ENCODE measurements at regions of chr2 and their contacts with region 1.

Region 1: DNA sequence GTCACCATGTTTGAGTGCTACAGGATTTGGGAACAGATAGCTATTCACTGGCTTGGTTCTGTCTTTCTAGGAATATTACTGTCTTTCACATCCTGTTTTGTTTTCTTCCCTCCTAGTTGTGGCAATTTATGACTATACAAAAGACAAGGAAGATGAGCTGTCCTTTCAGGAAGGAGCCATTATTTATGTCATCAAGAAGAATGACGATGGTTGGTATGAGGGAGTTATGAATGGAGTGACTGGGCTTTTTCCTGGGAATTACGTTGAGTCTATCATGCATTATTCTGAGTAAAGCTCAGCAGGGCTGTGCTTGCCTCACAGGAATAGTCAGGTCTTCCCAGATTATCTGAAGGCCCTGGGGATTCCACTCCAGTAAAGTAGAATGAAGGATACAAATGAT is 98.9 kb downstream of the ABI2 start:
- DNase-seq: peak; percentile 49
- ATAC-seq: peak; percentile 32; the same call in 1 of the 2 replicates
- H3K4me3 ChIP-seq: no peak overlapping the region
- H3K27ac ChIP-seq: no peak overlapping the region
- H3K4me1 ChIP-seq: no peaks in the 10 kb centered on the region
- H3K27me3 ChIP-seq: no peaks in the 10 kb centered on the region
- CTCF ChIP-seq: no peak
- POLR2A ChIP-seq: no peak
- RAD21 ChIP-seq: no peak

Region 2: GRCh38 chr2:203261326-203262159 is 165.5 kb before region 1 on chr2:
- CTCF ChIA-PET with region 1: no interaction called
- POLR2A ChIA-PET with region 1: no interaction called
- dilution Hi-C with region 1: no loop called
- in situ Hi-C with region 1: no loop called
- intact Hi-C with region 1: loop called (anchors 10 kb)
- DNase-seq: no peak
- ATAC-seq: no peak
- H3K4me3 ChIP-seq: no peak overlapping the region
- H3K27ac ChIP-seq: no peak overlapping the region
- H3K4me1 ChIP-seq: no peaks in the 10 kb centered on the region
- H3K27me3 ChIP-seq: no peaks in the 10 kb centered on the region
- CTCF ChIP-seq: no peak
- POLR2A ChIP-seq: no peak
- RAD21 ChIP-seq: no peak

Region 3: GRCh38 chr2:203360833-203361430 is 66.1 kb before region 1 on chr2:
- CTCF ChIA-PET with region 1: no interaction called
- POLR2A ChIA-PET with region 1: no interaction called
- dilution Hi-C with region 1: no loop called
- in situ Hi-C with region 1: no loop called
- intact Hi-C with region 1: no loop called
- DNase-seq: peak; percentile 19
- ATAC-seq: no peak
- H3K4me3 ChIP-seq: no peak overlapping the region
- H3K27ac ChIP-seq: no peak overlapping the region
- H3K4me1 ChIP-seq: no peaks in the 10 kb centered on the region
- H3K27me3 ChIP-seq: no peaks in the 10 kb centered on the region
- CTCF ChIP-seq: no peak
- POLR2A ChIP-seq: no peak
- RAD21 ChIP-seq: no peak

Region 4: GRCh38 chr2:203989521-203989920 is 562.5 kb after region 1 on chr2:
- CTCF ChIA-PET with region 1: no interaction called
- POLR2A ChIA-PET with region 1: no interaction called
- dilution Hi-C with region 1: no loop called
- in situ Hi-C with region 1: no loop called
- intact Hi-C with region 1: no loop called
- DNase-seq: no peak
- ATAC-seq: no peak
- H3K4me3 ChIP-seq: no peak overlapping the region
- H3K27ac ChIP-seq: no peak overlapping the region
- H3K4me1 ChIP-seq: no peaks in the 10 kb centered on the region
- H3K27me3 ChIP-seq: peaks cover 1% of the 10 kb centered on the region; the same call in 1 of the 2 replicates
- CTCF ChIP-seq: no peak
- POLR2A ChIP-seq: no peak
- RAD21 ChIP-seq: no peak

Measured in IMR-90 (cell line).